ENCODE measurements at regions of chr11 and their contacts with region 1.

Region 1: DNA sequence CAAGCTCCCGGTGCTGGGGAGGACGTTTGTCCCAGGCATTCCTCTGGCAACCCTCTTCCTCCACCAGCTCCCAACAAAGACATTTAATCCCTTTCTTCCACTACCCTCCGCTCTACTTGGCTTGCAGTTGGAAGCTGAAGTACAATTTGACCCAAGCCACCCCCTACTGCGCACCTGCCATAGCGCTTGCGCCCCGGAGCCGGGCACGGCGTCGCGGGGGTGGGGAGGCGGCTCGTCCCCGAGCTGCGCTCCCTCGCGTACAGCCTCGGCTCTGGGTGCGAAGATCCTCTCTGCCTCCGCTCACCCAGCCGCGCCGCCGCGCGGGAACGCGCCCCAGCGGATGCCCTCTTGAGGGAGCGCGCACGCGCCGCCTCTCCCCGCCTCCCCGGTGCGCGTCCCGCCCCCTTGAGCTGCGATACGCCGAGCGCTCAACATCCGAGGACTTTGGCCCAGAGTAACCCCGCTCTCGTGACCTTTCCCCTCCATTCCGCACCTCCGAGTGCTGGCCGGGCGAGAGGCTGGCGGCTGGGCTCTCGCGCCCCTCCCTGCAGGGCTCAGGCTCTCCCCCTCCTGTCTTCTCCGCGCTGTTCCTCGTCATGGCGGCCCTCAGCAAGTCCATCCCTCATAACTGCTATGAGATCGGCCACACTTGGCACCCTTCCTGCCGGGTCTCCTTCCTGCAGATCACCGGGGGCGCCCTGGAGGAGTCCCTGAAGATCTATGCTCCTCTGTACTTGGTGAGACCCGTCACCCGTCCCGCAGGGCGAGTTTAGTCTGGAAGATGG is at the start of gene TMEM135:
- DNase-seq: peak; percentile 82 to 94 (median 88)
- ATAC-seq: peak; percentile 94 to 96 (median 96)
- H3K4me3 ChIP-seq: peak within 1 kb of the TSS; percentile 86 to 88
- H3K4me3 Mint-ChIP-seq: peak within 1 kb of the TSS; percentile 96 to 97 (median 96)
- H3K27ac ChIP-seq: peak within 1 kb of the TSS; percentile 71
- H3K27ac Mint-ChIP-seq: peak within 1 kb of the TSS; percentile 81 to 94
- H3K4me1 ChIP-seq: peaks cover 12 to 14% of the 10 kb centered on the region in 2 experiments
- H3K4me1 Mint-ChIP-seq: peaks cover 56 to 60% (median 58%) of the 10 kb centered on the region in 3 donors
- H3K27me3 ChIP-seq: no peaks in the 10 kb centered on the region
- H3K27me3 Mint-ChIP-seq: no peaks in the 10 kb centered on the region
- total RNA-seq, gene TMEM135: 6.3 to 20.8 (median 12.7) TPM

Region 2: GRCh38 chr11:85740481-85741400 is 1296.9 kb before region 1 on chr11:
- CTCF ChIA-PET with region 1: no interaction called
- POLR2A ChIA-PET with region 1: interaction called in 1 of 2 experiments, 10 read pairs
- DNase-seq: no peak
- ATAC-seq: peak in 1 of 4 experiments; percentile 57
- H3K4me3 ChIP-seq: no peak overlapping the region
- H3K4me3 Mint-ChIP-seq: no peak overlapping the region
- H3K27ac ChIP-seq: peak overlapping the region; percentile 21
- H3K27ac Mint-ChIP-seq: peak overlapping the region; percentile 53
- H3K4me1 ChIP-seq: peaks cover 19 to 61% of the 10 kb centered on the region in 2 experiments
- H3K4me1 Mint-ChIP-seq: peaks cover 61 to 84% (median 76%) of the 10 kb centered on the region in 3 donors
- H3K27me3 ChIP-seq: no peaks in the 10 kb centered on the region
- H3K27me3 Mint-ChIP-seq: no peaks in the 10 kb centered on the region

Region 3: DNA sequence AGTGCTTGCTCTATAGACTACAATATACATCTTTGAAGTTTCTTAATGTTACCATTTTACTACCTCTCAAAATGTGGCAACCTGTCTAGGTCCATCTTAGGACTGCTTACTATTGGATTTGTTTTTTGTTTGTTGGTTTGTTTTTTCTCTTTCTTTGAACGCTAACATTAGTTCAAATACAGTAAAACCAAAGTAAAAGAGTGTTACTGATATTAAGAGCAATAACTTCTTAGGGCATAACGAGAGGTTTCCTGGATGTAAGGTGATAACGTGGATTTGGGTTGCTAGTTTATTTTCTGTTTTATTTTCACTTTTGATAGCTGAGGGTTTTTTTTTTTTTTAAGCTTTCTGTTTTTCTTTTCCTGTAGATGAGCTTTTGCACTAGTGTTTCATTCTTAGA is 43.7 kb after region 1 on chr11:
- CTCF ChIA-PET with region 1: interaction called, 4 to 9 read pairs
- POLR2A ChIA-PET with region 1: interaction called, 14 to 16 read pairs
- DNase-seq: peak in 1 of 35 experiments; percentile 37
- ATAC-seq: peak in 2 of 4 experiments; percentile 43 to 60
- H3K4me3 ChIP-seq: peak overlapping the region; percentile 40 to 44
- H3K4me3 Mint-ChIP-seq: peak overlapping the region; percentile 73 to 80 (median 76)
- H3K27ac ChIP-seq: peak overlapping the region; percentile 66
- H3K27ac Mint-ChIP-seq: peak overlapping the region; percentile 35 to 83
- H3K4me1 ChIP-seq: peaks cover 0 to 9% of the 10 kb centered on the region in 2 experiments
- H3K4me1 Mint-ChIP-seq: peaks cover 25 to 30% (median 26%) of the 10 kb centered on the region in 3 donors
- H3K27me3 ChIP-seq: no peaks in the 10 kb centered on the region
- H3K27me3 Mint-ChIP-seq: no peaks in the 10 kb centered on the region

Region 4: GRCh38 chr11:87092159-87092558 is 54.5 kb after region 1 on chr11:
- CTCF ChIA-PET with region 1: no interaction called
- POLR2A ChIA-PET with region 1: no interaction called
- DNase-seq: no peak
- ATAC-seq: no peak
- H3K4me3 ChIP-seq: no peak overlapping the region
- H3K4me3 Mint-ChIP-seq: no peak overlapping the region
- H3K27ac ChIP-seq: no peak overlapping the region
- H3K27ac Mint-ChIP-seq: no peak overlapping the region
- H3K4me1 ChIP-seq: no peaks in the 10 kb centered on the region
- H3K4me1 Mint-ChIP-seq: peaks cover 0 to 2% (median 0%) of the 10 kb centered on the region in 3 donors
- H3K27me3 ChIP-seq: no peaks in the 10 kb centered on the region
- H3K27me3 Mint-ChIP-seq: no peaks in the 10 kb centered on the region

Region 5: DNA sequence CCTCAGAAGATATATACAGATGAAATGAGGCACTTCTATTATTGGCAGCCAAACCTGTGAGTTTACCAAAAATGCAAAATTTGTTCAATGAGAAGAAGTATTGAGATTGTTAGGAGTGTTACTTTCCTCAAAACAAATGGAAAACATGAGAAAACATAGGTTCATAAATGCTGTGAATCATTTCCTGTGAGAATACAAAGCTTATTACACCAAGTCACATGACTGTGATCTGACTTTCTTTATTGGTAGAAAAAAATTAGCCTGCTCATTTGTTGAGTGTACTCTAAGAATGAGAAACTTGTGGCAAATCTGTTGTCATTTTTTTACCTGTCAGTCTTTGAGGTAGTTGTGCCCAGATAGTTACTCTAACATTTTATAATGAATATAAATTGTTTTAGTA is 215.2 kb after region 1 on chr11:
- CTCF ChIA-PET with region 1: no interaction called
- POLR2A ChIA-PET with region 1: no interaction called
- DNase-seq: no peak
- ATAC-seq: no peak
- H3K4me3 ChIP-seq: no peak overlapping the region
- H3K4me3 Mint-ChIP-seq: no peak overlapping the region
- H3K27ac ChIP-seq: no peak overlapping the region
- H3K27ac Mint-ChIP-seq: no peak overlapping the region
- H3K4me1 ChIP-seq: no peaks in the 10 kb centered on the region
- H3K4me1 Mint-ChIP-seq: peaks cover 31 to 53% (median 32%) of the 10 kb centered on the region in 3 donors
- H3K27me3 ChIP-seq: no peaks in the 10 kb centered on the region
- H3K27me3 Mint-ChIP-seq: no peaks in the 10 kb centered on the region

Measured in T-cell (primary cell).